Endothelial cell of umbilical vein (primary cell): ENCODE measurements at regions of chr9 and their contacts with region 1.

Region 1: GRCh38 chr9:19925817-19926503 is 137.1 kb upstream of the SLC24A2 start:
- DNase-seq: peak; percentile 74
- H3K4me3 ChIP-seq: peak overlapping the region; percentile 17 to 52 (median 26)
- H3K27ac ChIP-seq: no peak overlapping the region
- H3K4me1 ChIP-seq: peaks cover 5% of the 10 kb centered on the region
- H3K27me3 ChIP-seq: peaks cover 5 to 13% of the 10 kb centered on the region in 2 experiments
- CTCF ChIP-seq: peak; percentile 92 to 94
- POLR2A ChIP-seq: no peak

Region 2: GRCh38 chr9:19464764-19465585 is 461.0 kb before region 1 on chr9:
- CTCF ChIA-PET with region 1: interaction called, 41 read pairs
- POLR2A ChIA-PET with region 1: no interaction called
- dilution Hi-C with region 1: no loop called
- intact Hi-C with region 1: no loop called
- DNase-seq: peak; percentile 63
- H3K4me3 ChIP-seq: peak overlapping the region; percentile 13 to 27 (median 19)
- H3K27ac ChIP-seq: no peak overlapping the region
- H3K4me1 ChIP-seq: peaks cover 2% of the 10 kb centered on the region
- H3K27me3 ChIP-seq: peaks cover 2% of the 10 kb centered on the region in 2 experiments
- CTCF ChIP-seq: peak; percentile 71 to 77
- POLR2A ChIP-seq: no peak

Region 3: DNA sequence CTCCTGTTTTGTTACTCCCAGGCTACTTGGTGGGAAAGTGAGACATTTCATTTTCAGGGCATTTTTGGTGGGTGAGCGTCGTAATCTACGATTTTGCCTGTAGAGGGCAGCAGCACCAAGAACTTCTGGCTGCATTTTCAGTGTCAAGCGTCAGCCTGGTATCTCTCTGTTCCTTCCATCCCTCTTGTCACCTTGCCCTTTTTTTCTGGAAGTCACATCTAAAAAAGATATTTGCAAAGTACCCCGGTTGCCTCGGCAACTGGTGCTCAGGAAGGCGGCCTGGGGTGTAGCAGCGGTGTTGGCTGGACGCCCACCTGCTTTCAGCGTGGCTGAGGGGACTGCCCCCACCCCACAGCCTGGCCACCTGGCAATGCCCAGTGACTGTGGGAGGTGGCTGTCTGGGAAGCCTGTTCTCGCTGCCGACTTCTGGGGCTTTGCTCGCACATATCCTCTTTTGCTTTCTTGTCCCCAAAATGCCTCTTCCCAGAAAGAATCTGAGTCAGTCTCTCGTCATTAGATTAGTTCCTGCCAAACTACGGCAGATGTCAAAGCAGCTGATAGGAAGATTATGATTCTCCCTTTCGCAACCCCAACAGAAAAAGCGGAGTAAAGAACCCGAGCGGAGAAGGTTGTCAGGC is 432.7 kb before region 1 on chr9:
- CTCF ChIA-PET with region 1: no interaction called
- POLR2A ChIA-PET with region 1: no interaction called
- dilution Hi-C with region 1: no loop called
- intact Hi-C with region 1: loop called (anchors 1 kb)
- DNase-seq: peak; percentile 59
- H3K4me3 ChIP-seq: no peak overlapping the region
- H3K27ac ChIP-seq: no peak overlapping the region
- H3K4me1 ChIP-seq: no peaks in the 10 kb centered on the region
- H3K27me3 ChIP-seq: peaks cover 5 to 13% of the 10 kb centered on the region in 2 experiments
- CTCF ChIP-seq: peak; percentile 69 to 76
- POLR2A ChIP-seq: no peak

Region 4: DNA sequence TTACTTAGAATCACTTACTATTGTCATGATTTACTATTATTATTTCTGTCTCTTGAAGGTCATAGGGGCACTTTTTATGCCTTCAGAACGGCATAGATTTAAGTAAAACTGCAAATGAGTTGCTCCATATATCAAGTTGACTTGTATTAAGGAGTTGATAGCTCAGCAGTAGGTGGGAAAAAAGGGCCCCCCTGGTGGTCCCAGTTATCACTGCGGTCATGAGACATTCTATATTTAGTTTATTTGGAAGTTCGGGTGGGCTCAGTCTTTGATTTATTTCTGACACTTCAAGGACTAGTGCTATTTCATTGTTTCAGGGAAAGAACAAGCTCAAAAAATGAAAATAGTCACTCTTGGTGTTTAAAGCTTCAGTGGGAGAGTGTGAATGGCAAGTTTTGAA is 296.5 kb before region 1 on chr9:
- CTCF ChIA-PET with region 1: no interaction called
- POLR2A ChIA-PET with region 1: no interaction called
- dilution Hi-C with region 1: no loop called
- intact Hi-C with region 1: no loop called
- DNase-seq: no peak
- H3K4me3 ChIP-seq: no peak overlapping the region
- H3K27ac ChIP-seq: no peak overlapping the region
- H3K4me1 ChIP-seq: no peaks in the 10 kb centered on the region
- H3K27me3 ChIP-seq: no peaks in the 10 kb centered on the region
- CTCF ChIP-seq: no peak
- POLR2A ChIP-seq: no peak

Region 5: DNA sequence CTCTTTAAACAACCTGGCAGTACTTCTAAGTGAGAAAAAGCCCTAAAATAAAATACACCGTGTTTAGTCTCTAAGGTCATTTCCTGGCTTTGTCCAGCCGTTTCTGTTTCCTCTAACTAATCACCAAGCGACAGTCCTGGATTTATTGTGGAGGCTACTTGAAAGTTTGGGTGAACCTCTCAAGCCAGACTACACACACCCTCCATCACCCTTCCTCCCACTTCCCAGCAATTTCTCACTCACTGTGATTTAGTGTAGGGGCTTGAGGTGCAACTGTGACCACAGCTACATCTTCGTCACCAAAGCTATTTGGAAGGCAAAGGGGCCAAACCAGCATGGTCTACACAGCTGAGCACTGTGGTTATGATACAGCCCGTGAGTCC is 102.9 kb after region 1 on chr9:
- CTCF ChIA-PET with region 1: no interaction called
- POLR2A ChIA-PET with region 1: no interaction called
- dilution Hi-C with region 1: no loop called
- intact Hi-C with region 1: loop called (anchors 5 kb)
- DNase-seq: peak; percentile 73
- H3K4me3 ChIP-seq: no peak overlapping the region
- H3K27ac ChIP-seq: peak overlapping the region; percentile 64
- H3K4me1 ChIP-seq: peaks cover 28% of the 10 kb centered on the region
- H3K27me3 ChIP-seq: no peaks in the 10 kb centered on the region
- CTCF ChIP-seq: no peak
- POLR2A ChIP-seq: no peak

Region 6: DNA sequence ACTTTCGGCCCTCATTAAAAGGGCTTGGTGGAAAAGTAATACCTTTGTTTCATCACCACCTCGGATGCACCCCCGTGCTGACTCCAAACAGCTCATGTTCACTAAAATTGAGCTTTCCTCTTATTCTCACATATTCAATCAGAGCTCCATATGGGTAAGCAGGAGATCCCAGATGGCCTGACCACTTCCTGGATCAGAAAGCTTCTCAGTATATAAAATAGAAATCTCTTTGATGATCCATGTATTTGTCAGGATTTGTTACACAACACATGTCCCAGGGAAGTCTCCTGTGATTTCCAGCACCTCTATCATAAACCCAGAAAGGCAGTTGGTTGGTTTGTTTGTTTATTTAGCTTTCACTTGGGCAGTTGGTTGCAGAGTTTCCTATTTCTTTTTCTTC is 294.3 kb after region 1 on chr9:
- CTCF ChIA-PET with region 1: no interaction called
- POLR2A ChIA-PET with region 1: no interaction called
- dilution Hi-C with region 1: no loop called
- intact Hi-C with region 1: no loop called
- DNase-seq: no peak
- H3K4me3 ChIP-seq: no peak overlapping the region
- H3K27ac ChIP-seq: no peak overlapping the region
- H3K4me1 ChIP-seq: no peaks in the 10 kb centered on the region
- H3K27me3 ChIP-seq: peaks cover 0 to 3% of the 10 kb centered on the region in 2 experiments
- CTCF ChIP-seq: no peak
- POLR2A ChIP-seq: no peak

Region 7: DNA sequence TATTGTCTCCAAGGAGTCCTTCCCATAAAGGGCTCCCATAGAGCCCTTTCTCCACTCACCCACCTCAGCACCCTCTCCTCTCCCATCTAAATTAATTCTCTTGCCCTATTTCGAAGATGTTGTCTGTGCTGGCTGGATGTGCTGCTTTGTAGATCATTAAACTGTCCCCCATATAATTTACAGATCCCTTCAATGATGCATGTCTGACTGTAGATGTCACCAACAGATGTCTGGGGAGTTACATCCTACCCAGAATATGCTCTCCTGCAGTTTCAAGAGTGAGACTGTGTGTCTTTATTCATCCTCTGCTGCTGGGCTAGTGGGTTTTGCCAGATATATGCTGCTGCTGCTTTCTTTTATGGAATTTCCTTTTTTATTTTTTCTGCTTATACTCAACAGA is 345.1 kb after region 1 on chr9:
- CTCF ChIA-PET with region 1: no interaction called
- POLR2A ChIA-PET with region 1: no interaction called
- dilution Hi-C with region 1: no loop called
- intact Hi-C with region 1: loop called (anchors 1 kb)
- DNase-seq: no peak
- H3K4me3 ChIP-seq: no peak overlapping the region
- H3K27ac ChIP-seq: no peak overlapping the region
- H3K4me1 ChIP-seq: no peaks in the 10 kb centered on the region
- H3K27me3 ChIP-seq: no peaks in the 10 kb centered on the region
- CTCF ChIP-seq: no peak
- POLR2A ChIP-seq: no peak

Region 8: GRCh38 chr9:20407012-20407411 is 481.1 kb after region 1 on chr9:
- CTCF ChIA-PET with region 1: no interaction called
- POLR2A ChIA-PET with region 1: no interaction called
- dilution Hi-C with region 1: no loop called
- intact Hi-C with region 1: loop called (anchors 5 kb)
- DNase-seq: no peak
- H3K4me3 ChIP-seq: no peak overlapping the region
- H3K27ac ChIP-seq: no peak overlapping the region
- H3K4me1 ChIP-seq: peaks cover 2% of the 10 kb centered on the region
- H3K27me3 ChIP-seq: no peaks in the 10 kb centered on the region
- CTCF ChIP-seq: no peak
- POLR2A ChIP-seq: no peak

Region 9: DNA sequence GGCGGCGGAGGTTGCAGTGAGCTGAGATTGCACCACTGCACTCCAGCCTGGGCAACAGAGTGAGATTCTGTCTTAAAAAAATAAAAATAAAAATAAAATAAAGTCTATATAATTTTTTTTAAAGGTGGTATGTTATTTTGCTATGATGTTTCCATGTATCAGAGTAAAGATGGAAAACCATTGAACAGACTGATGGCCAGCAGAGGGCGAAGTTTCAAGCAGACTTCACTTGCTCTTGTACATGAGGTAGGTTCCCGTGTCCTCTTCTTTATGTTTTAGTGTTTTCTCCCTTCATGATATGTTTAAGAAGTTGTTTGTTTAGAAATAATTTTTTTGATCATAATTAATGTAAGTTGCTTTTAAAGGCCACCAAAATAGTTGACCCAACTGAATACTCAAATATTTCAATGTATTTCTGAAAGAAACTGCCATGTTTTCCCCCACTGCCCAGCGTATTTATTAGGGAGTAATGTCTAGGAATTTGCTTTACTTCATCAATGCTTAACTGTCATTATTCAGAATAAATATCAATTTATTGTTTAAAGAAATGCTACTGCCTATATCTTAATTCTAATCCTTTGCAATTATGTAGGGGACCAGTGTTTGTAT is 959.1 kb after region 1 on chr9:
- CTCF ChIA-PET with region 1: no interaction called
- POLR2A ChIA-PET with region 1: no interaction called
- dilution Hi-C with region 1: no loop called
- intact Hi-C with region 1: loop called (anchors 10 kb)
- DNase-seq: peak; percentile 51
- H3K4me3 ChIP-seq: no peak overlapping the region
- H3K27ac ChIP-seq: no peak overlapping the region
- H3K4me1 ChIP-seq: no peaks in the 10 kb centered on the region
- H3K27me3 ChIP-seq: no peaks in the 10 kb centered on the region
- CTCF ChIP-seq: peak; percentile 44 to 59
- POLR2A ChIP-seq: no peak